ENCODE measurements at regions of chr15 and their contacts with region 1.

Region 1: GRCh38 chr15:80776420-80777045 is 2.6 kb upstream of the CEMIP start:
- DNase-seq: peak; percentile 64
- H3K4me3 ChIP-seq: no peak overlapping the region
- CTCF ChIP-seq: peak; percentile 79

Region 2: DNA sequence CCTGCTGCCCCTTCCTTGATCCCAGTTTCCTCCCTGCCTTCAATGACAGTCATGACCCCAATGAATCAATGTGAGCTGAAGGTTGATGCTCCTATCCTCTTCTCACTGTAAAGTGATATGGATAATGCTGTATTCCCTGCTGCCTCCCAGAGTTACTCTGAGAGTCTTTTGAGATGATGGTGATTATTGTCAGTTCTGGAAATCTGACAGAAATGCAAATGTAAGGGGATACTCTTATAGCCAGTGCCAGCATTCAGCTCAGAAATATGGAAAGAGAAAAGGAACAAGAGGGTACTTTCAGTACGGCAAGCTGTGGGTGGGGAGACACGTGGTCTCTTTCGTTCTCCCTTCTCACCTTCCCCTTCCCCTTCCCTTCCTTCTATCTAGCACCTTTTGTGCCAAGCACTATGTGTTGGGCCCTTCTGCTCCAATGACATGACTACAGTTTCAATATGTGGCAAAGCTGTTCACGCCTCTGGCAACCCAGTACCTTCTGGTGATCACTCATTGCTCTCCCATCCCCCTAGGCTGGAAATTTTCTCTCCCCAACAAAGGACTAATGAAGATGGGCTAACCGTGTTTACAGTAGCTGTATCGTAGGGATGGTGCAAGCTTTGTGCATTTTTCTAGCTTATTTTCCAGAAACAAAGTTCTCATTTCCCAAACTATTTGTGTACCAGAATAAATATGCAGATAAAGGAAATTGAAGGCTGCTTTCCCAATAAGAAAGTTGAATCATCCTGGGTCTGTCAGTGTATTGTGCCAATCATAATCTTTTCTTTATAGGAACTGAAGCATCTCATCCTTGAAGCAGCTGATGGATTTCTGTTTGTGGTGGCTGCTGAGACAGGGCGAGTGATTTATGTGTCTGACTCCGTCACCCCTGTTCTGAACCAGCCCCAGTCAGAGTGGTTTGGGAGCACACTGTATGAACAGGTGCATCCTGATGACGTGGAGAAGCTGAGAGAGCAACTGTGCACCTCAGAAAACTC is 302.0 kb before region 1 on chr15:
- CTCF ChIA-PET with region 1: interaction called, 28 read pairs
- POLR2A ChIA-PET with region 1: interaction called, 4 read pairs
- DNase-seq: no peak
- H3K4me3 ChIP-seq: no peak overlapping the region
- CTCF ChIP-seq: no peak

Region 3: GRCh38 chr15:80567721-80568157 is 208.8 kb before region 1 on chr15:
- CTCF ChIA-PET with region 1: interaction called, 285 read pairs
- POLR2A ChIA-PET with region 1: interaction called, 8 read pairs
- DNase-seq: peak; percentile 52
- H3K4me3 ChIP-seq: no peak overlapping the region
- CTCF ChIP-seq: peak; percentile 81

Region 4: DNA sequence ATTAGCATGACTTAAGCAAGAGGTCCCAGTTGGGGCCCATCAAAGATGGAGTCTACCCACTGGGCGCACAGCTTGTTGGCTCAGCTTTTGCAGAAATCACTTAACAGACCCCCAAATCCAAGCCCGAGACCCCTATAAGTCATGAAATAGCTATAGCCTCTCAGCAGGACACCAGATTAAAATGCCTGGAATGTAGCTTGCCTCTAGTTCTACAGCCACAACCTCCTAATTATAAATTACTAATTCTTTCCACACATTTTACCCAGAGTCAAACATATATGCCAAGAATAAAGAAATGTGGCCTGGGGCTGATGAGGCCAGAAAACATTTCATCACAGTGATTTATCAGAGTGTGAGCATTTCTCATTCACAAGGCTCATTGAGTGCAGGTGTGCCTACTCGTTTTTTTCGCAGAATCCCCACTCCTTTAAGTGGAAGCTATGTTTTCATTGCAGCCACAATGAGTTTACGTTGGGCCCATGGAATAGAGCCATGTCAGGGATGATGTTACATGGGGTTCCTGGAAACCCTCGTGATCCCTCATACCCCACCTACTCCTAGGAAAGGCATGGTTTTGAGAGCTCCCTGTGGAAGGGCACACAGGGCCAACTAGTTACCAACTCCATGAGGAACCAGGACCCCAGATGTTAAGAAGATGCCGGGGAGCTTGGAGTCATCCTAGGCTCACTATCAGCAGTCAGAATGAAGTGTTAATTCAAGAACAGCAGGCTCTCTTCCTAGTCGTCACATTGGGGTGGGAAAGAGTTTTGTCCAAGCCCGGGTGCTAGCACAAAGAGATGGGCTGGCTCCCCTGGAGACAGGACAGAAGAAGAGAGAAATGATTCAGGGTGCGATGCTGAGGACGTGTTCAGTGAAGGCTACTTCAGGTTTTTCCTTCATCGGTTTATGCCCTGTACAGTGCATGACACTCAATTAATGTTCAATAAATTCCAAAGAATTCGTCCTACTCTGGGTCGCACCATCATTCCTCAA is 171.7 kb before region 1 on chr15:
- CTCF ChIA-PET with region 1: interaction called, 20 read pairs
- POLR2A ChIA-PET with region 1: no interaction called
- DNase-seq: no peak
- H3K4me3 ChIP-seq: no peak overlapping the region
- CTCF ChIP-seq: no peak

Region 5: GRCh38 chr15:80636675-80637074 is 139.9 kb before region 1 on chr15:
- CTCF ChIA-PET with region 1: no interaction called
- POLR2A ChIA-PET with region 1: no interaction called
- DNase-seq: no peak
- H3K4me3 ChIP-seq: no peak overlapping the region
- CTCF ChIP-seq: no peak

Region 6: GRCh38 chr15:80695104-80695910 is 81.2 kb before region 1 on chr15 and contains the start of gene ABHD17C:
- CTCF ChIA-PET with region 1: interaction called, 11 read pairs
- POLR2A ChIA-PET with region 1: interaction called, 8 read pairs
- DNase-seq: no peak
- H3K4me3 ChIP-seq: peak within 1 kb of the TSS; percentile 85
- CTCF ChIP-seq: no peak

Region 7: DNA sequence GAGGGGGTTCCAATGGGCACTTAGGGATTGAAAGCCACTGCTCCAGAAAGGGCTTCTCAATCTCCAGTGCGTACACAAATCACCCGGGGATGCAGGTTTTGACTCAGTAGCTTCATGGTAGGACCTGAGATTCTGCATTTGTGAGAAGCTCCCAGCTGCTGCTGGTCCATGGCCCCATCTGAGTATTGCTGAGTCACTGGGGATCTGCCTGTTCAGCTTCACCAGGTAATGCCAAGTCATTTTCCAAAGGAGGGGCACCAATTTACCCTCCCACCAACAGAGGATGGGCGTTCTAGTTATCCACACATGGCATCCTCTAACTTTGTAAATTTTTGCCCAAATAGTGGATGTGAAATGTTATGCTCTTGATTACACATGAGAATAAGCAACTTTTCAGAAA is 10.3 kb before region 1 on chr15:
- CTCF ChIA-PET with region 1: interaction called, 20 read pairs
- POLR2A ChIA-PET with region 1: no interaction called
- DNase-seq: no peak
- H3K4me3 ChIP-seq: no peak overlapping the region
- CTCF ChIP-seq: no peak

Region 8: GRCh38 chr15:80970018-80970658 is 193.6 kb after region 1 on chr15:
- CTCF ChIA-PET with region 1: interaction called, 121 read pairs
- POLR2A ChIA-PET with region 1: interaction called, 7 read pairs
- DNase-seq: no peak
- H3K4me3 ChIP-seq: no peak overlapping the region
- CTCF ChIP-seq: peak; percentile 63